ENCODE measurements at regions of chr3 and their contacts with region 1.

Region 1: DNA sequence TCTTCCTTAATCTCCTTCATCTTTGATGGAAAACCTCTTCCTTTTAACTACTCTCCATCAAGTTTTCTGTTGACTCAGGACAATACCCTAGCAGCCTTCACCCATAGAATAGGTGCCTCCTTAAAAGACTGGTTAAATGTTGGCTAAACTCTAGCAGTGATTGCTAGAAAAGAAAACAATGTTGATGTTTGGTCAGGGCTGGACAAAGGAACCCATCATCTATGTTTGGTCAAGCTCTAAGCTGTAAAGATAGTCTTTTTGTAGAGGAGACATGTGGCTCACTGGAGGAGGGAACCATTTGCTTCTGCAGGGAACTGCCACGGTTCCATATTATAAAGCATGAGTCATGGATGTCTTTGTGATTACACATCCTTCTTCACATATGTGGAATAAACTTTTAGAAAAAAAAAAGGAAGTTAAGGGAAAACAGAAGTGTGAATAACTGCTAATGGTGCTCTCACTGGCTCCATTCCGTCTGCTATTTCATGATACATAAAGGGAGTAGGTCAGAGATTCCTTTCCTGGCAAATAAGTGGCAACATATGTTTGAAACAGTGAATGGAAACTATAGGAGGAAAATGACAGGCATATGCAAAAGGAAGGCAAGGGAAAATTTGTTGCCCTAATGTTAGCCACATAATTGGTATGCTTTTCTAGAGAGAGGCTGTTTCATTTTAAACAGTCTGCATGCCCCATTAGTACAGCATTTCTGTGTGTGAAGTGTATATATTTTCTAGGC is 78.2 kb downstream of the CMSS1 start:
- DNase-seq: peak; percentile 78
- H3K4me3 Mint-ChIP-seq: peak overlapping the region; percentile 5
- H3K27ac Mint-ChIP-seq: peak overlapping the region; percentile 79
- H3K4me1 Mint-ChIP-seq: peaks cover 15% of the 10 kb centered on the region
- H3K27me3 Mint-ChIP-seq: no peaks in the 10 kb centered on the region
- CTCF ChIP-seq: no peak

Region 2: DNA sequence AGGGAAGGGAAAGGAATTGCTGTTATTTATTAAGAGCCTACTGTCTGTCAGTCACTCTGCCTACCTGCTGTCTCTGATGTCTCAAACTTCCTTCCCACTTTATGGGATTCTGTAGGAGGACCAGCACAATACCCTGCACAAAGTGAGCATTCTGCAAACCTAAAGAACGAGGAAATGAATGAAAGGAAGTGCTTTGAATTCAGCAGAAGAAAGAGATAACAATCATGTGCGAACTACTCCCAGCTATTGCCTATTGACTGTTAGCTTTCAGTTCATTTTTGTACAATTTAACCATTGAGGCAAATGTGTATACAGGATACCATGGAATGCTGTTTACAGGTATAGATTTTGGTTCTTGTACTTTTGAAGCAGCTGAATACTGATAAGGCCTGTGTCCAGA is 11.4 kb before region 1 on chr3:
- CTCF ChIA-PET with region 1: interaction called, 16 read pairs
- POLR2A ChIA-PET with region 1: interaction called, 8 read pairs
- intact Hi-C with region 1: no loop called
- DNase-seq: no peak
- H3K4me3 Mint-ChIP-seq: no peak overlapping the region
- H3K27ac Mint-ChIP-seq: no peak overlapping the region
- H3K4me1 Mint-ChIP-seq: peaks cover 9% of the 10 kb centered on the region
- H3K27me3 Mint-ChIP-seq: no peaks in the 10 kb centered on the region
- CTCF ChIP-seq: no peak

Measured in MCF 10A (cell line).